ENCODE measurements at regions of chr3 and their contacts with region 1.

Region 1: DNA sequence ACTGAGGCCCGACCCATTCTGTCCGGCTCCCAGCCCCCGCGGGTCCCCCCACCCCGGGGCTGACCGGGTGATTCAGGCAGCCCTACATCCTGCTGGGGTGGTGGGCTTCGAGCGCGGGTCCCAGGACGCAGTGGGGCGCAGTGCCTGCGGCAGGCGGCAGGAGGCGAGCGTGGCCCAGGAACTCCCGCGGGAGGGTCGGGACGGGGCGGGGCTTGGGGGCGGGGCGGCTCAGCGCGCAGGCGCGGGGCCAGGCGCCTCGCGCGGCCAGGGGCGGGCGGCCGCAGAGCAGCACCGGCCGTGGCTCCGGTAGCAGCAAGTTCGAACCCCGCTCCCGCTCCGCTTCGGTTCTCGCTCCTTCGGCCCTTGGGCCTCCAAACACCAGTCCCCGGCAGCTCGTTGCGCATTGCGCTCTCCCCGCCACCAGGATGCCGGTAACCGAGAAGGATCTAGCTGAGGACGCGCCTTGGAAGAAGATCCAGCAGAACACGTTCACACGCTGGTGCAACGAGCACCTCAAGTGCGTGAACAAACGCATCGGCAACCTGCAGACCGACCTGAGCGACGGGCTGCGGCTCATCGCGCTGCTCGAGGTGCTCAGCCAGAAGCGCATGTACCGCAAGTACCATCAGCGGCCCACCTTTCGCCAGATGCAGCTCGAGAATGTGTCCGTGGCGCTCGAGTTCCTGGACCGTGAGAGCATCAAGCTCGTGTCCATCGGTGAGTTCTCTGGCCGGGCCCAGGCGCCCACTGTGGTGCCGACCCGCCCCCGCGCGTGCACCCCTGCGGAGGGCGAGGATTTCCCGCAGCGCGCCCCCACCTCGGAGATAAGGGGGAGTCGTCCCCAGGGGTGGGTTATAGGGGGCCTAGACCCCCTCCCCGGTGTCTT is at the start of gene FLNB:
- DNase-seq: peak; percentile 81
- H3K4me3 Mint-ChIP-seq: peak within 1 kb of the TSS; percentile 86
- H3K27ac Mint-ChIP-seq: peak within 1 kb of the TSS; percentile 73
- H3K4me1 Mint-ChIP-seq: peaks cover 41% of the 10 kb centered on the region
- H3K27me3 Mint-ChIP-seq: no peaks in the 10 kb centered on the region
- total RNA-seq, gene FLNB: 33.3 to 37.9 TPM

Region 2: DNA sequence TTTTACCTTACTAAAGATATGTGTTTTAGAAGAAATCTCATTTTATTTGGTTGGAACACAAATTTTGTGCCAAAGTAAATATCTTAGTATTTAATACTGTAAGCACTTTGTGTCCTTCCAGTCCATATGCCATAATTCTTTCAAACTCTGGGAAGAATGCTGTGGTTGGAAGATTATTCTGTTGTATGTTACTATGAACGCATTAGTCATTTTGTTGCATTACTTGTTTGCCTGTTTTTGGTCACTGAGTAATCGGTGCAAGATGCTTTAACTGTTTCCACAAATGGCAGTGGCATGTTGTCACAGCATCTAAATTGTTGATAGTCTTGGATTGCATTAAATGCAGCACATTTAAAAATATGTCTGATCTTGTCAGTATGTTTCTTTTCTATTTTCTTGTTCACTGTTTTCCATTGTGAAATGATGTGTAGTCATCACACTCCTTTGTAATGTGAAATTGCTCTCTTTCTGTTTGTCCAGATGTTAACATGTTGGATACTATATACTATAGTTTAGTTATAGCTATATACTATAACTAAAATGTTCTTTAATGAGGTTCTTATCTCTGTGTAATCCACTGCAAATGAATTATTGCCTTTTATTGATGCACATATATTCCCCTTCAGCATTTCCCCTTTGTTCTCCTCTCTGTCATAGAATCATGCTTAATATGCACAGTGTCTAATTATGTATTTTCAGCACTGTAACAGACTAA is 90.1 kb before region 1 on chr3:
- CTCF ChIA-PET with region 1: no interaction called
- POLR2A ChIA-PET with region 1: no interaction called
- DNase-seq: no peak
- H3K4me3 Mint-ChIP-seq: no peak overlapping the region
- H3K27ac Mint-ChIP-seq: no peak overlapping the region
- H3K4me1 Mint-ChIP-seq: no peaks in the 10 kb centered on the region
- H3K27me3 Mint-ChIP-seq: no peaks in the 10 kb centered on the region

Region 3: DNA sequence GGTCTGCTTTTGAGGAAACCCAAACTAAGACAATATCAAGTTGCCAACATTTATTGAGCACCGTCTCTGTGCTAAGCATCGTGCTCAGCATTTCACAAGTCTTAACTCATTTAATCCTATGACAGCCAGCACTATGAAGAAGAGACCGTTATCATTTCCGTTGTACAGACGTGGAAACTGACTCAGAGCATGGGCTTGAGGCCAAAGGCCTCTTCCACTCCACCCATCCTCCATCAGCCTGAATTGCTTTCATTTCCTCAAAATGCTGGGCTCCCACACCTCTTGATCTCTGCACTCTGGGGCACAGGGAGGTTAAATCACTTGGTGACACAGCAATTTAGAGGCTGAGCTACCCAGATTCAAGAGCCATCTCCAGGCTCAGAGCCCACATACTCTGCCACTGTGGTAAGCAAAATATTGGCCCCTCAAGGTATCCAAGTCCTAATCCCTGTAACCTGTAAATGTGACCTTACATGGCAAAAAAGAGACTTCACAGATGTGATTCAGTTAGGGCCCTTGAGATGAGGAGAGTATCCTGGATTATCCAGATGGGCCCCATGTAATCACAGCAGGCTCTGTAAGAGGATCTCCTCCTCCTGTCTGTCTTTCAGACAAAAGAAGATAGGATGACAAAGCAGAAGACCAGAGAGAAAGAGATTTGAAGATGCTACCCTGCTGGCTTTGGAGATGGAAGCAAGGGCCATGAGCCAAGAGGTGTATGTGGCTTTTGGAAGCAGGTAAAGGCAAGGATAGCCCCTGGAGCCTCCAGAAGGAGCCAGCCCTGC is 24.5 kb before region 1 on chr3:
- CTCF ChIA-PET with region 1: interaction called, 11 read pairs
- POLR2A ChIA-PET with region 1: interaction called, 3 read pairs
- DNase-seq: peak; percentile 71
- H3K4me3 Mint-ChIP-seq: no peak overlapping the region
- H3K27ac Mint-ChIP-seq: peak overlapping the region; percentile 91
- H3K4me1 Mint-ChIP-seq: peaks cover 32% of the 10 kb centered on the region
- H3K27me3 Mint-ChIP-seq: no peaks in the 10 kb centered on the region

Region 4: DNA sequence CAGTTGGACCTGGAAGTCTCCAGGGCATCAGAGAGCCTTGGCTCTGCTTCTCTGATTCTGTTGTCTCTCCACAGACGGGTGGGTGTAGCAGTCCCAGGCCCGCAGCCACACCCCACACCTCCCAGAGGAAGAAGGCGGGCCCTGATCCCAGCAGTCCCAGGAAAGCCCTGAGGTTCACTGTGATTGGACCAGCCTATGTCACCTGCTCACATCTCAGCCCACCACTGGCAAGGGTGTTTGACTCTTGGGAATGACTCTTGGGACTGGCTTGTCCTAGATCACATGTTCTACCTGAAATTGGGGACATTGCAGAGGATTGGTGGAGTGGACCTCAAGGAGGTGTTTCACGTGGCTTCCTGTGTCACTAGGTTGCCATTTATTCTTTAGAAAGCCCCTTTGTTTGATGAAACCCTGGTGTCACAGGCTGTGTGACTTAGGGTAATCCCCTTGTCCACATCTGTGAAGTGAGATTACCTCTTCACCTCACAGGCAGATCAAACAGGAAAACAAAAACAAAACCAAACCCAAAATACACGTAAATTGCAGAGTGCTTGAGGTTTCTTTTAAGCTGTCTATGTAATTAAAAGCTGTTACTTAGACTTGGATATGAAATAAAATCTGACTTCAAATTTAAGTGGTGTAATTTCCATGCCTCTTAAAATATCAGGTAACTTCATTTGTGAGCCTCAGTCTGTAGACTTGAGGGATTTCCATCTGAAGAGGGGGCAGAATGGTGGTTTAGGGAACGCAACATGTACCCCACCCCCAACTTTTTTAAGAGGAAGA is 26.5 kb after region 1 on chr3:
- CTCF ChIA-PET with region 1: interaction called, 15 read pairs
- POLR2A ChIA-PET with region 1: interaction called, 4 read pairs
- DNase-seq: peak; percentile 43
- H3K4me3 Mint-ChIP-seq: peak overlapping the region; percentile 9
- H3K27ac Mint-ChIP-seq: peak overlapping the region; percentile 77
- H3K4me1 Mint-ChIP-seq: peaks cover 51% of the 10 kb centered on the region
- H3K27me3 Mint-ChIP-seq: no peaks in the 10 kb centered on the region

Region 5: GRCh38 chr3:58177747-58178527 is 169.6 kb after region 1 on chr3:
- CTCF ChIA-PET with region 1: interaction called, 19 read pairs
- POLR2A ChIA-PET with region 1: interaction called, 9 read pairs
- DNase-seq: peak; percentile 89
- H3K4me3 Mint-ChIP-seq: peak overlapping the region; percentile 61
- H3K27ac Mint-ChIP-seq: no peak overlapping the region
- H3K4me1 Mint-ChIP-seq: peaks cover 21% of the 10 kb centered on the region
- H3K27me3 Mint-ChIP-seq: peaks cover 4% of the 10 kb centered on the region

Measured in activated CD4-positive, alpha-beta memory T cell treated with anti-CD3 and anti-CD28 coated beads, Interleukin-2, amount 10 ng/mL, durations not matched to agents 7 days and 5 days (primary cell).